CD4-positive, alpha-beta memory T cell (primary cell): ENCODE measurements at regions of chr3 and their contacts with region 1.

Region 1: GRCh38 chr3:50272911-50273693 is 4.2 kb downstream of the SEMA3B start:
- DNase-seq: peak; percentile 73 to 83 (median 79)
- H3K4me3 ChIP-seq: no peak overlapping the region
- H3K4me3 Mint-ChIP-seq: peak overlapping the region; percentile 35 to 81 (median 74)
- H3K27ac ChIP-seq: no peak overlapping the region
- H3K27ac Mint-ChIP-seq: peak overlapping the region in 3 of 7 donors; percentile 9 to 88 (median 53)
- H3K4me1 ChIP-seq: peaks cover 35% of the 10 kb centered on the region
- H3K4me1 Mint-ChIP-seq: peaks cover 14 to 37% (median 25%) of the 10 kb centered on the region in 4 donors
- H3K27me3 ChIP-seq: peaks cover 35% of the 10 kb centered on the region
- H3K27me3 Mint-ChIP-seq: peaks cover 23 to 31% of the 10 kb centered on the region in 2 donors

Region 2: GRCh38 chr3:50121416-50122032 is 151.6 kb before region 1 on chr3:
- CTCF ChIA-PET with region 1: no interaction called
- POLR2A ChIA-PET with region 1: no interaction called
- intact Hi-C with region 1: loop called (anchors 1 kb)
- DNase-seq: peak; percentile 56 to 69 (median 62)
- H3K4me3 ChIP-seq: no peak overlapping the region
- H3K4me3 Mint-ChIP-seq: no peak overlapping the region
- H3K27ac ChIP-seq: no peak overlapping the region
- H3K27ac Mint-ChIP-seq: peak overlapping the region in 4 of 7 donors; percentile 1 to 73 (median 65)
- H3K4me1 ChIP-seq: no peaks in the 10 kb centered on the region
- H3K4me1 Mint-ChIP-seq: peaks cover 0 to 11% (median 3%) of the 10 kb centered on the region in 4 donors
- H3K27me3 ChIP-seq: no peaks in the 10 kb centered on the region
- H3K27me3 Mint-ChIP-seq: no peaks in the 10 kb centered on the region

Region 3: DNA sequence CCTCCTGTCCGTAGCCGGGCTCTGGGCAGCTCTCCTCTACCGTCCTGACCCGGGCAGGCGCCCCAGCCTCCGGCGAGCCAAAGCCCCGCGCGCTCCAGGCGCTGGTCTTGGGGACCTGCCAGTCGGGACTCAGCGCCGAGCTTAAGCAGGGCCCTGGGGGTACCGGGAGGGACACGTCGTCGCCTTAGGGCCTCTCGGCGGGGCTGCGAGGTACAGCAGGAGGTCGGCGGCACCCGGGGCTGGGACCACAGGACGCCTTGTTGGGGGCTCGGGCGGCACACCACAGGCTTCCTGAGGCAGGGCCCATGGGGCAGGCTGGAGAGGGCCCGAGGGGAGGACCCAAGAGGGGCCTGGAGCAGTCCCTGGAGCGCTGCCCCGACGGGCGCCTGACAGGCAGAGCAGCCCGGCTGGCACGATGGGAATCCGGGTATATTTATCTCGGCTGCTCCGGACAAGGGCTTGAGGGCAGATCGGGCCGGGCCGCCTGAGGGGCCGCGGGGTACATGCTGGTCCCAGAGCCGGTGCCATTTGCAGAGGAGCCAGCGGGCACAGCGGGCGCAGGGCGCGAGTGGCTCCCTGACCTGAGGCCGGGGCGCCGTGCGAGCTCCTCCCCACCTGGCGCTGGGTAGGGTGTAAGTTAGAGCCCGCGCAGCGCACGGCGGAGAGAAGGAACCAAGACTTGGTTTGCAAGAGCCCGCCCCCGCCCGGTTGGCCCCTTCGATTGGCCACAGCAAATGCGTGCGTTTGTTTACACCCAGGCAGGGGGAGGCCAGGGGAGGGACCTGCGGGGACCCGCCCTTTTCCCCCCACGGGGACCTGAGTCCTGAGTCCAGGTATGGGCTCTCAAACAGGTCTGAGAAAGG is 67.5 kb before region 1 on chr3:
- CTCF ChIA-PET with region 1: no interaction called
- POLR2A ChIA-PET with region 1: no interaction called
- intact Hi-C with region 1: no loop called
- DNase-seq: peak in 3 of 5 donors; percentile 16 to 59 (median 21)
- H3K4me3 ChIP-seq: no peak overlapping the region
- H3K4me3 Mint-ChIP-seq: peak overlapping the region in 5 of 8 donors; percentile 9 to 41 (median 21)
- H3K27ac ChIP-seq: no peak overlapping the region
- H3K27ac Mint-ChIP-seq: no peak overlapping the region
- H3K4me1 ChIP-seq: peaks cover 13% of the 10 kb centered on the region
- H3K4me1 Mint-ChIP-seq: peaks cover 0 to 4% (median under 1%) of the 10 kb centered on the region in 4 donors
- H3K27me3 ChIP-seq: peaks cover 23% of the 10 kb centered on the region
- H3K27me3 Mint-ChIP-seq: peaks cover 34 to 35% of the 10 kb centered on the region in 2 donors

Region 4: GRCh38 chr3:50245831-50246516 is 27.1 kb before region 1 on chr3:
- CTCF ChIA-PET with region 1: interaction called, 6 read pairs
- POLR2A ChIA-PET with region 1: interaction called, 10 read pairs
- intact Hi-C with region 1: loop called (anchors 1 kb)
- DNase-seq: peak; percentile 89 to 94 (median 92)
- H3K4me3 ChIP-seq: peak overlapping the region; percentile 24 to 44
- H3K4me3 Mint-ChIP-seq: peak overlapping the region; percentile 75 to 88 (median 80)
- H3K27ac ChIP-seq: peak overlapping the region; percentile 76
- H3K27ac Mint-ChIP-seq: peak overlapping the region; percentile 92 to 98 (median 95)
- H3K4me1 ChIP-seq: peaks cover 97% of the 10 kb centered on the region
- H3K4me1 Mint-ChIP-seq: peaks cover 44 to 89% (median 71%) of the 10 kb centered on the region in 4 donors
- H3K27me3 ChIP-seq: no peaks in the 10 kb centered on the region
- H3K27me3 Mint-ChIP-seq: no peaks in the 10 kb centered on the region

Region 5: DNA sequence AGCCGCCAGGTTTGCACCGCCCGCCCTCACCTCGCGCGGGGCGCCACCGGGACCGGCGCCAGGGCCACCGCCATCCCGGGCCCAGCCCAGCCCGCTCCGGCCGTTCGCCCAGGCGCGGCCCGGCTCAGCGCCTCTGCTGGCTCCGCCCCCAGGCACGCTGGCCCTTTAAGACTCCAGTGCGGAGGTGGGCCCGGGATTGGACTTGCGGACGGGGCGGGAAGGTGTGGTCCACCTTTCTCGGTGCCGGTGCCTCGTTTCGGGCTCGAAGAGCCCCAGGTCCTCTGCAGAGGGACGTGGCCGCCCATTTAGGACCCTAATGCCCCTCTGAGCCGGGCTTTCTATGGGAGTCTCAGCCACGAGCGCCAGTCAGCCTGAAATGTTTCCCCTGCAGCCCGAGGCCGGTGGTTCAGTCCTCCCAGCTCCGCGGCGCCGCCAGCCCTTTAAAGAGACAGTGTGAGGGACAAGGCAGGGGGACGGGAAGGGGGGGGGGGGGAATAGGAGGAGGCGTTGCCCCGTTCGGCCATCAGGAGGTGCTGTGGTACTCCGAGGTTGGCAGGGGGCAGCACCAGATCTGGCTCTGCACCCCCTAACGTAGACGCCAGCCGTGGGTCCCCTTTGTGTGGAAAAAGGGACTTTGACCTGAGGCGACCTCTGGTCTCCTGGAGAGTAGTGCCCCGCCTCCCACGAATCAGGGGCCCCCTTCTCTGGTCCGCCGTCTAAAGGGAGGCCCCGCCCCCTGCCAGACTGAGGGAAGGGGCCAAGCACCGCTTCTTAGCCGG is 48.4 kb after region 1 on chr3:
- CTCF ChIA-PET with region 1: interaction called, 12 read pairs
- POLR2A ChIA-PET with region 1: no interaction called
- intact Hi-C with region 1: loop called (anchors 1 kb)
- DNase-seq: peak; percentile 80 to 88 (median 83)
- H3K4me3 ChIP-seq: peak overlapping the region; percentile 23 to 87
- H3K4me3 Mint-ChIP-seq: peak overlapping the region; percentile 80 to 90 (median 86)
- H3K27ac ChIP-seq: peak overlapping the region; percentile 73
- H3K27ac Mint-ChIP-seq: peak overlapping the region; percentile 90 to 95 (median 93)
- H3K4me1 ChIP-seq: peaks cover 38% of the 10 kb centered on the region
- H3K4me1 Mint-ChIP-seq: peaks cover 18 to 57% (median 38%) of the 10 kb centered on the region in 4 donors
- H3K27me3 ChIP-seq: no peaks in the 10 kb centered on the region
- H3K27me3 Mint-ChIP-seq: no peaks in the 10 kb centered on the region